GM10248 (cell line): ENCODE measurements at regions of chr3 and their contacts with region 1.

Region 1: GRCh38 chr3:122356415-122356814 is 26.6 kb downstream of the MIX23 start:
- DNase-seq: peak; percentile 47
- CTCF ChIP-seq: peak; percentile 53

Region 2: DNA sequence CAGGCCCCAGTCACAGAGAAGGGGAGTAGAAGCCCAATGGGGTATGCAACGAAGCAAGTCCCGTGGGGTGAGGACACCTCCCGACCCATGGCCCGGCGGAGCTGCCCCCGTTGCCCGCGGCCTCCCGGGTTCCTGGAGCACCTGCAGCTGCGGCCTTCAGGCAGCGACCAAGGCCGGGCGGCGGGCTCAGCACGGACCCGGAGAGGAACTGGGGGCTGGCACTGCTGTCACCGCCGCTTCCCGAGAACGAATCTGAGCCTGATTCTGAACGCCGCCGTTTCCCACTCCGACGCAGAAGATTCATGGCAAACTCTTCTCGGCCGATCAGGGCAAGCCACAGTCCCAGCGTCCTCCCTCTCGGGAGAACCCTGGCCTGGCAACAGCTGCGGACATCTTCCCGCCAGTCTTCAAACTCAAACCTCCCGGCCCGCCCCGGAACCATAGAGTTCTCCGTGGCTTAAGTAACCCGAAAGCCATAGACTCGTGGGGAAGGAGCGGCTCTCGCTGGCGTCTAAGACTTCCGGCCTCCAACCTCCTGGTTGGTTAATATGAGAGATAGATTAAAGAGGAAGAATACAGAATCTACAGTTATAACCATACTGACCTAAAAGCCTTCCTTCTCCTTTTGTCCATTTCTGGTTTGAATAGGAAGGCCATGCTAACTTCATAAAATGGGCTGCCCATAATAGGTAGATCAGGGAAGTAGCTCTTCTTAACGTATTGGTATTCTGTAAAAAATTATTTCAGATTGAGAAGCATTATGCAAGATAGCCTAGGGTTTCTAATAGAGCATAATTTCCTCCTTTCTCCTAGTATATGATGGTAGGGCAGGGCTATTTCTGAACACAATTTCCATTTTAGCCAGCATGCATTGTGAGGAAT is 810.6 kb before region 1 on chr3 and contains the start of gene POLQ:
- CTCF ChIA-PET with region 1: interaction called, 10 read pairs
- POLR2A ChIA-PET with region 1: no interaction called
- DNase-seq: peak; percentile 91
- CTCF ChIP-seq: no peak

Region 3: DNA sequence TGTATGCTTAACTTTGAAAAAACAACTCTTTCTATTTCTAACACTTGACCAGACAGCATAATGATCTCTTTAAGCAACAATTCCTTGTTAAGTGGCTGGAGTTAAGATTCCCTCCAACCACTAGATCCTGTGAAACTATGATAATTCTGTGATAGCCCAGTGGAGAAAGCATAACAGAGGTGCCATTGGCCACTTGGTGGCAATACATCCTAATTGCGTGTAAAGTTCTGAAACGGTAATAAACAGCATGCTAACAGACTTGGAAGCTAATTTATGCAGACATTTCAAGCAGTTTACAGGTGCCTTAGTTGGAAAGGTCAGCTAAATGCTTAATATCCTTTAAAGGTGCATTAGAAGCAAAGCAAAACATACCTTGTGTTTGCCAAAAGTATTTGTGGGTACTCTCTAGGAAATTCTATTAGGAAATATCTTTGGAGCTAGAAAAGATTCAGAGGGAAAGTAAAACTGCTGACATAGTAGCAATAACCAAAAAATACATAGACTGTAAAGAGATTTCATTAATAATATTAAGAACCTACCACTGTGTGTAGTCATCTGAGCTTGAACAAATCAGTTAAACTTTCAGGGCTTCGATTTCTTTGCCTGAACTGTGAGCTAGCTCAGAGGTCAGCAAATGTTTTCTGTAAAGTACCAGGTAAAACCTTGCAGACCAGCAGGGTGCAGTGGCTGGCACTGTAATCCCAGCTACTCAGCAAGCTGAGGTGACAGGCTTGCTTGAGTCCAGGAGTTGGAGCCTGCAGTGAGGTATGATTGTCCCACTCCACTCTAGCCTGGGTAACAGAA is 50.4 kb before region 1 on chr3:
- CTCF ChIA-PET with region 1: interaction called, 20 read pairs
- POLR2A ChIA-PET with region 1: no interaction called
- DNase-seq: no peak
- CTCF ChIP-seq: peak; percentile 36

Region 4: DNA sequence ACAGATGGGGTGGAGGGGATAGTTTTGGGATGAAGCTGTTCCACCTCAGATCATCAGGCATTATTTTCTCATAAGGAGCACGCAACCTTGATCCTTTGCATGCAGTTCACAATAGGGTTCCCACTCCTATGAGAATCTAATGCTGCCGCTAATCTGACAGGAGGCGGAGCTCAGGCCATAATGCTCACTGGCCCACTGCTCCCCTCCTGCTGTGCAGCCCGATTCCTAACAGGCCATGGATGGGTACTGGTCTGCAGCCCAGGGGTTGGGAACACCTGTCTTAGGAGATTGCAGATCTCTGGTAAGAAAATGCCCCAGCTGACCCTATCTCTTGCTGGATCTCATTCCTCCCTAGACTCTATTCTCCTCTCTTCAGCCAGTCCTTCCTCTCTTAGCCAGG is 24.5 kb before region 1 on chr3:
- CTCF ChIA-PET with region 1: interaction called, 10 read pairs
- POLR2A ChIA-PET with region 1: no interaction called
- DNase-seq: no peak
- CTCF ChIP-seq: no peak